ENCODE measurements at regions of chr1 and their contacts with region 1.

Region 1: DNA sequence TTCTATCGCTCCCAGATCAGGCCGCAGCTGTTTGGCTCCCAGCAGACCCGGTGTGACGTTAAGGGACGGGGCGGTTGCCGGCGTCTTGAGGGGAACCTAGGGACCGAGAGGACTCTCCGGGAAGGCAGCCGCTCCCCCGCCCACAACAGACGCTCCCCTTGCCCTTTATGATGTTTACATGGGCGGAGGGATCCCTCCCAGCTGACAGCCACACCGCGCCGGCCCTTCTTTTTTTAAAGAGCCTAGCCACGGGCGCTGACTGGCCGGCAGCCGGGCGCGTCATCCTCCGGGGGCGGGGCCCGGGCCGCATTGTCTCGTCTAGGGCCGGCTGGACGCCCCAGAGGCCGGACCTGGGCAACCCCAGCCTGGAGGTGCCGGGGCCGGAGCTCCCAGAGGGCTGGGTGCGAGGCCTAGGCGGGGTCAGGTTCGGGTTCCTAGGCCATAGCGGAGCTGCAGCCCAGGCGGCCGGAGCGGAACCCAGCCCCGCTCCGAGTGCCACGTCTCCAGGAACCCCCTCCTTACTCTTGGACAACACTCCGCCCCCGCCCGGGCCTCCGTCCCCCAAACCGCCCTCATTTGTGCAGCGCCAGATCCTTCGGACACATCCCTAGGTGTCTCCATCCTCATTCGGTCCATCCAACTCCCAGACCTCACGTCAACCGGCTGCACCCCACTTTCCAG is at the start of gene PCAT6:
- DNase-seq: peak; percentile 94
- ATAC-seq: peak; percentile 86
- H3K4me3 ChIP-seq: peak within 1 kb of the TSS; percentile 94
- H3K27ac ChIP-seq: peak within 1 kb of the TSS; percentile 92
- H3K4me1 ChIP-seq: peaks cover 3% of the 10 kb centered on the region
- H3K27me3 ChIP-seq: peaks cover 1% of the 10 kb centered on the region; the same call in 1 of the 2 replicates
- CTCF ChIP-seq: no peak
- POLR2A ChIP-seq: peak; percentile 97
- RAD21 ChIP-seq: no peak
- total RNA-seq, gene PCAT6: 0.56 TPM in 1 of 2 replicates, not detected in the other

Region 2: DNA sequence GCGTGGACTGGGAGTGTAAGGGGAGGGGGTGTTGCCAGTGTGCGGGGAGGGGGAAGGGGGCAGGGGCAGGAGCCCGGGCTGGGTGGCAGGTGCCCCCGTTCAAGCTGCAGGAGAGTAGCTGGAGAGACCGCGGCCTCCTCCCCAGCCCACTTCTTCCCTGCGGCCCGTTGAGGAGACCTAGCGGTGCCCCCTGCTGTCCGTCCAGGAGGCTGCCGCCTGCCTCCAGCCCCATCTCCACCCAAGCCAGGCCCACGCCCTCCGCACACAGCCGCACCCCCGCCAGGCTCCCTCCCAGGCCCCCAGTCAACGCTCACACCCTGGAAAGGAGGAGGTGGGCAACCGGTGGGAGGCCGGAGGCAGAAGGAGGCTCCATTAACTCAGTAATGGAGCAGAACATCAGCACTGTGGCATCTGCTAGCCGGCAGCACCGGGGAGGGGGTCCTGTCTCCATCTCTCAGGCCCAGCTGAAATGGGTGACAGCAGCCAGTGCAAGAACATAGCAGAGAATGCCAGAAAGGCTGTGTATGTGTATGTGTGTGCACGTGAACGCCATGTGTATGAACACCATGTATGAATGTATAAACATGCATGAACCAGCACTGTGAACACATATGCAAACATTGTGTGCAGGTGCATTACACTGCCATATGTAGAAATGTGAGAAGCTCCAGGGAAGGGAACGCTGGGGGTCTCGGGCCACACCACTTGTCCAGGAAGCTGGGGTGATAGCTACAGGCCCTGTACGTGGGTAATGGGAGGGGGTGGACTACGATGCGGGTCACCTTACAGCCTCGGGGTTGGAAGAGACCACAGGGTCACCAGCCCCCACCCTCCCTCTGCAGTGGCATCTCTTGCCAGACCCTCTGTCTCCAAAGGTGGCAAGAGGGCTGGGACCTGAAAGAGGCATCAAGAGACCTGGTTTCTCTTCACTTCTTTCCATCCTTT is 185.1 kb before region 1 on chr1:
- CTCF ChIA-PET with region 1: no interaction called
- POLR2A ChIA-PET with region 1: no interaction called
- dilution Hi-C with region 1: no loop called
- in situ Hi-C with region 1: no loop called
- intact Hi-C with region 1: no loop called
- DNase-seq: peak; percentile 57
- ATAC-seq: peak; percentile 89
- H3K4me3 ChIP-seq: no peak overlapping the region
- H3K27ac ChIP-seq: no peak overlapping the region
- H3K4me1 ChIP-seq: peaks cover 7% of the 10 kb centered on the region
- H3K27me3 ChIP-seq: peaks cover 7% of the 10 kb centered on the region
- CTCF ChIP-seq: peak; percentile 71
- POLR2A ChIP-seq: no peak
- RAD21 ChIP-seq: peak; percentile 71

Region 3: DNA sequence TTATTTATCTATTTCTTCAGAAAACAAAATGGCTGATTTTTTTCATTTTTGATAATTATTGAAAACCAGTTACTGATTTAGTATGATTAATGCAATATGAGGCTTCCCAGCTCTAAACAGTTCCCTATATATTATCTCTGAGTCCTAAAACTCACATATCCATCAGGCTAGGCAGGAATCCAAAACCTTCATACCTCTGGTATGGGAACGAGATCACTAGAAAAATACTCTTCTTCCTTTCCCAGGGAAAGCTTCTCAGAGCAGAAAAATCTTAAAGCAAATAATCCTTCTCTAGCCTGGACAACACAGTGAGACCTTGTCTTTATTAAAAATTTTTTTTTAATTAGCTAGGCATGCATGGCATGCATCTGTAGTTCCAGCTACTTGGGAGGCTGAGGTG is 45.0 kb before region 1 on chr1:
- CTCF ChIA-PET with region 1: no interaction called
- POLR2A ChIA-PET with region 1: no interaction called
- dilution Hi-C with region 1: no loop called
- in situ Hi-C with region 1: no loop called
- intact Hi-C with region 1: loop called (anchors 5 kb)
- DNase-seq: peak; percentile 63
- ATAC-seq: peak; percentile 63
- H3K4me3 ChIP-seq: no peak overlapping the region
- H3K27ac ChIP-seq: no peak overlapping the region
- H3K4me1 ChIP-seq: peaks cover 1% of the 10 kb centered on the region
- H3K27me3 ChIP-seq: no peaks in the 10 kb centered on the region
- CTCF ChIP-seq: no peak
- POLR2A ChIP-seq: no peak
- RAD21 ChIP-seq: no peak

Region 4: DNA sequence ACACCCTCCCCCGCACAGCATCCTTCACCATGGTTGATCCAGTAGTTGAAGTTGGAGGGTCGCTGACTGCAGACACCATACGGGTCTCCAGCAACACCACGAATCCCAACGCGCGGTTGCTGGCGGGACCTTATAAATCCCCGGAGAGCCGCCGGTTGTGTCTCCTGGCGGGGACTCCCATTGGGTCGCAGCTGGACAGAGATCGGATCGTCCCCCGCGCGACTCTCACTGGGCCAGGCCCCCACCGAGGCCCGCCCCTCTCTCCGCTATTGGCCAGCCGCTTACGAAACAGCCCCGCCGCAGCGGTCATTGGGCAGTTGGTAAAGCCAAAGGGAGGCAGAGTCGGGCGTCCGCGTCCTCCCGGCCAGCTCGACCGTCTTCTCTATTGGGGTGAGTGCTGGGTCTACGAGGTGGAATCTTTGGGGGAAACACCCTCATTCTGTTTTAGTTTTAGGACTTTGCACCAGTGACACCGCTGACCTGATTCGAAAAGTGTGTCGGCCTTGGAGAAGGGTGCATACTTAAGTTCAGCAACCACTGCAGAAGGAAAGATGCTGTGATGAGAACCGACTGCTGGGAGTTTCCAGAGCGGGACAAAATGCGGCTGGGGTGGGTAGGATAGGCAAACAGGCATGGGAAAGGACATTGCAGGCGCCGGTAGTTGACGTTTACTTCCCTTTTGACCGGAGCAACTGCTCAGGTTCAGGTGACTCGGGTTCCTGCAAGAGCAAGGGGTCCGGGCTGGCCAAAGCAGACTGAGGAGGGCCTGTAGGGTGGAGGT is 50.9 kb after region 1 on chr1:
- CTCF ChIA-PET with region 1: no interaction called
- POLR2A ChIA-PET with region 1: no interaction called
- dilution Hi-C with region 1: no loop called
- in situ Hi-C with region 1: no loop called
- intact Hi-C with region 1: loop called (anchors 2 kb)
- DNase-seq: peak; percentile 86
- ATAC-seq: peak; percentile 100
- H3K4me3 ChIP-seq: peak overlapping the region; percentile 81
- H3K27ac ChIP-seq: no peak overlapping the region
- H3K4me1 ChIP-seq: no peaks in the 10 kb centered on the region
- H3K27me3 ChIP-seq: peaks cover 4% of the 10 kb centered on the region; the same call in 1 of the 2 replicates
- CTCF ChIP-seq: no peak
- POLR2A ChIP-seq: no peak
- RAD21 ChIP-seq: no peak

Region 5: DNA sequence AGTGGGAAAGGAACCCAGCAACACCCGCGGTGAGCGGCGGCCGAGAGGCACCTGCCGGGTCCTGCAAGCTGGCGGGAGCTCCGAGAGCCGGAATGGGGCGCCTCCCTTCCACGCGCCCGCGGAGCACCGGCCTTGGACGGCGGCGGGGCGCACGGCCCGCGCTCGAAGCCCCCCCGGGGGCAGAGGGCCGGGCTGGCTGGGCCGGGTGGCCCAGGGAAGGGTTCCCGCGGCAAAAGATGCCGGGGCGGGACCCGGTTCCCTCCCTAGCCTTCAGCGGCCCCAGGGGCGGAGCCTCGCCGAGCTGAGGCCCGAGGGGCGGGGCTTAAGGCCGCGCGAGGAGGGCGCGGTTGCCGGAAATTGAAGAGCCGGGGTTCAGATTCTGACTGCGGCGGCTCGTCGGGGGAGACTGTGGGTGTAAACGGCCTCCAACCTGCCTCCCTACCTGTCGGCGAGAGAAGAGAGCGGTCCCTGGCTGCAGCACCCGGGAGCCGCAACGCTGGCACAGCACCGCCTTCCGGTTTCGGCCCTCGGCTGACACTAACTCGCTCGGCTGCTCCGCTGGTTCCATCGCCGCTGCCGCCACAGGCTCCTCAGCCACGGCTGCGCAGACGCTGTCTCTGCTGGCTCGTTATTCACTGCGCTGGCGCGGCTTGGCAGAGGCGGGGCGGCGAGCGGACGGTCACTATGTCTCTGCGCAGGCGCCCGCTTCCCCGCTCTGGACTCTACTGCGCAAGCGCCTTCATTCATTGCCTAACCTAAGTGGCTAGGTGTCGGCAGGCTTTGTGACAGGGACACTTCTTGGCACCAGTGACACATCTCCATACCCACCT is 78.0 kb after region 1 on chr1 and contains the start of gene RABIF:
- CTCF ChIA-PET with region 1: no interaction called
- POLR2A ChIA-PET with region 1: no interaction called
- dilution Hi-C with region 1: no loop called
- in situ Hi-C with region 1: no loop called
- intact Hi-C with region 1: loop called (anchors 1 kb)
- DNase-seq: peak; percentile 91
- ATAC-seq: peak; percentile 98
- H3K4me3 ChIP-seq: peak within 1 kb of the TSS; percentile 80
- H3K27ac ChIP-seq: peak within 1 kb of the TSS; percentile 85
- H3K4me1 ChIP-seq: no peaks in the 10 kb centered on the region
- H3K27me3 ChIP-seq: no peaks in the 10 kb centered on the region
- CTCF ChIP-seq: peak; percentile 32
- POLR2A ChIP-seq: peak; percentile 80
- RAD21 ChIP-seq: no peak
- total RNA-seq, gene RABIF: 4.8 and 6.9 TPM in 2 replicates

Measured in IMR-90 (cell line).